Posterior vena cava (tissue), 2 donors: ENCODE measurements at regions of chr19 and their contacts with region 1.

Region 1: GRCh38 chr19:6412447-6413091 is 12.0 kb downstream of the KHSRP start:
- DNase-seq: no peak

Region 2: DNA sequence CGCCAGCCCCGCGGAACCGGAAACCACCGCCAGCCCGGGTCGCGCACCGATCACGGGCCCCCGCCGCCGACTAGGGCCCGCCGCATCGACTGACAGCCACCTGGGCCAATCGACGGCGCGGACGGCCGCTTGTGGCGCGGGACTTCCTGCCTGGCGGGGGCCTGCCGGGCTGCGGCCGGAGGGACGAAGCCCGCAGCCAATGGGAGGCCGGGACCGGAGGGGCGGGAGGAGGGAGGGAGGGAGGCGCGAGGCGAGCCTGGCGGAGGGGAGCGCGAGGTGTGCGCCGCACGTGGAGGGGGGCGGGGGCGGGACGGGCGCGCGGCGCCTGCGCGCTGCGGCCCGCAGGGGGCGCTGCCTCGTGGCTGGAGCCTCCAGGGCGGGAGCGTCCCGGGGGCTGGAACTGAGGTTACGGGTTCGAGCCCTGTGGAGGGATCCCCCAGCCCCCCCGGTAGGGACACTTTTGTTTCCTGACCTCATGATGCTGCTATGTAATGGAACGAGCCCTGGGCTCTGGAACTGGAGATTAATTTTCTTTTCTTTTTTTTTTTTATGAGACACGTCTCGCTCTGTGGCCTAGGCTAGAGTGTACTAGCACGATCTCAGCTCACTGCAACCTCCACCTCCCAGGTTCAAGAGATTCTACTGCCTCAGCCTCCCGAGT is 132.5 kb before region 1 on chr19 and contains the start of gene MLLT1:
- intact Hi-C with region 1: loop called in 1 of 2 experiments (anchors 10 kb)
- DNase-seq: peak; percentile 99
- total RNA-seq, gene MLLT1: 49.2 to 52.0 TPM

Region 3: DNA sequence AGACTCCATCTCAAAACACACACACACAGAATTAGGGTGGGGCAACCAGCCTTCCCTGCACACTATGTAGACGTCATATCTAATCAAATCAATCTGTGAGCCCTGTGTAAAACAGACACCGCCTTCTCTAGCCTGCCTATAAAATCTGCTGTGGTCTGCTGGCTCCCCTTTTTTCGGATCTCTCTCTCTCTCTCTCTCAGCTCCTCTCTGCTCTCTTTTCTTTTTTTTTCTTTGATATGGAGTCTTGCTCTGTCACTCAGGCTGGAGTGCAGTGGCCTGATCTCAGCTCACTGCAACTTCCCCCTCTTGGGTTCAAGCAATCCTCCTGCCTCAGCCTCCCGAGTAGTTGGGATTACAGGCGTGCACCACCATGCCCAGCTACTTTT is 190.2 kb after region 1 on chr19:
- intact Hi-C with region 1: no loop called
- DNase-seq: no peak

Region 4: DNA sequence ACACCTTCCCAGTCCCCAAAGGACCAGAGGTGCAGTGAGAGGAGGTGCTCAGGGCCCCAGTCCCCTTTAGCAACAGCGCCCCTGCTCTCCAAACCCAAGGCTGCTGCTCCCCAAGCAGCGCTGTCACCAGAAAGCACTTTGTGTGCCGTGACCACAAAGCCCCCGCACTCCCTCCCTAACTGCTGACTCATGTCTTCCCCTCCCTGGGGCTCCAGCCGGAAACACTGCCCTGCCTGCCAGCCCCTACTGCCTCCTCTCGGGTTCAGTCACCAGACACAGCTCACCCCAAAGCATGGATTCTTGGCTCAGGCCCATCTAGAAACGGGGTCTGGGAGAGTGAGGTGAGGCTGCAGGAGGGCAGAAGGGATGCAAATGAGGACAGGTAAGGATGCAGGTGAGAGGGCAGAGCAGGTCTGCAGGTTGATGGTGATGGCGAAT is 262.3 kb after region 1 on chr19:
- intact Hi-C with region 1: no loop called
- DNase-seq: peak; percentile 90